Esophagus muscularis mucosa (tissue), 4 donors: ENCODE measurements at regions of chr2 and their contacts with region 1.

Region 1: GRCh38 chr2:219406861-219407230 is 11.3 kb upstream of the DES start:
- DNase-seq: no peak
- H3K4me3 ChIP-seq: peak overlapping the region in 1 of 4 donors; percentile 14
- H3K27ac ChIP-seq: peak overlapping the region; percentile 86 to 97 (median 94)
- H3K4me1 ChIP-seq: peaks cover 65 to 82% (median 81%) of the 10 kb centered on the region in 4 donors
- H3K27me3 ChIP-seq: no peaks in the 10 kb centered on the region
- CTCF ChIP-seq: no peak
- EP300 ChIP-seq: peak; percentile 50
- POLR2A ChIP-seq: no peak

Region 2: GRCh38 chr2:219378163-219378851 is 28.5 kb before region 1 on chr2:
- intact Hi-C with region 1: no loop called
- DNase-seq: no peak
- H3K4me3 ChIP-seq: no peak overlapping the region
- H3K27ac ChIP-seq: no peak overlapping the region
- H3K4me1 ChIP-seq: no peaks in the 10 kb centered on the region
- H3K27me3 ChIP-seq: no peaks in the 10 kb centered on the region
- CTCF ChIP-seq: no peak
- EP300 ChIP-seq: no peak
- POLR2A ChIP-seq: no peak

Region 3: GRCh38 chr2:219433666-219434467 is 27.0 kb after region 1 on chr2:
- intact Hi-C with region 1: loop called (anchors 1 kb)
- DNase-seq: no peak
- H3K4me3 ChIP-seq: peak overlapping the region; percentile 53 to 63 (median 57)
- H3K27ac ChIP-seq: peak overlapping the region; percentile 94 to 99 (median 96)
- H3K4me1 ChIP-seq: peaks cover 23 to 76% (median 69%) of the 10 kb centered on the region in 4 donors
- H3K27me3 ChIP-seq: peaks cover 0 to 24% (median 0%) of the 10 kb centered on the region in 4 donors
- CTCF ChIP-seq: peak; percentile 61 to 84 (median 75)
- EP300 ChIP-seq: peak; percentile 96
- POLR2A ChIP-seq: peak; percentile 48

Region 4: DNA sequence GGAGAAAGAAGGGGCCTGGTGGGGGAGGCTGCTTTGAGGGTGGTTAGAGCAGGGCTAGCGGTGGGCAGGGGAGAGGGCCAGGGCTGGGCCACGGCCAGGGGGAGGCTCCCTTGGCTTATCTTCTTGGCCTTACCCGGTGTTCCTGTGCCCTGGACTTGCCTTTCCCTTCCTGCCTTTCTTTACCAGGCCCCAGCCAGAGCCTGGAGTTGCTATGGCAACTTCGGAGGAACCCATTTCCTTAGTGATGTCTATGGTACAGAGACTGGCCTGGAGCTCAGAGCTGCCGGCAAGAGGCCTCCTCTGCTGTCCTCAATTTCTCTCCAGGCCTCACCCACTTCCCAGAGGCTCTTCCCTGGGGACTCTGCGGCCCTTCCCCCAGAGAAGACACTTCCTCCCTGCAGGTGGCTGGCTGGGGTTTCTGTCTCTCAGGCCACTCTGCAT is 39.3 kb after region 1 on chr2:
- intact Hi-C with region 1: loop called (anchors 5 kb)
- DNase-seq: no peak
- H3K4me3 ChIP-seq: peak overlapping the region in 2 of 4 donors; percentile 78 to 85
- H3K27ac ChIP-seq: peak overlapping the region; percentile 94 to 99 (median 96)
- H3K4me1 ChIP-seq: peaks cover 33 to 100% (median 99%) of the 10 kb centered on the region in 4 donors
- H3K27me3 ChIP-seq: peaks cover 0 to 61% (median 0%) of the 10 kb centered on the region in 4 donors
- CTCF ChIP-seq: no peak
- EP300 ChIP-seq: no peak
- POLR2A ChIP-seq: no peak